HepG2 (cell line): ENCODE measurements at regions of chr12 and their contacts with region 1.

Region 1: DNA sequence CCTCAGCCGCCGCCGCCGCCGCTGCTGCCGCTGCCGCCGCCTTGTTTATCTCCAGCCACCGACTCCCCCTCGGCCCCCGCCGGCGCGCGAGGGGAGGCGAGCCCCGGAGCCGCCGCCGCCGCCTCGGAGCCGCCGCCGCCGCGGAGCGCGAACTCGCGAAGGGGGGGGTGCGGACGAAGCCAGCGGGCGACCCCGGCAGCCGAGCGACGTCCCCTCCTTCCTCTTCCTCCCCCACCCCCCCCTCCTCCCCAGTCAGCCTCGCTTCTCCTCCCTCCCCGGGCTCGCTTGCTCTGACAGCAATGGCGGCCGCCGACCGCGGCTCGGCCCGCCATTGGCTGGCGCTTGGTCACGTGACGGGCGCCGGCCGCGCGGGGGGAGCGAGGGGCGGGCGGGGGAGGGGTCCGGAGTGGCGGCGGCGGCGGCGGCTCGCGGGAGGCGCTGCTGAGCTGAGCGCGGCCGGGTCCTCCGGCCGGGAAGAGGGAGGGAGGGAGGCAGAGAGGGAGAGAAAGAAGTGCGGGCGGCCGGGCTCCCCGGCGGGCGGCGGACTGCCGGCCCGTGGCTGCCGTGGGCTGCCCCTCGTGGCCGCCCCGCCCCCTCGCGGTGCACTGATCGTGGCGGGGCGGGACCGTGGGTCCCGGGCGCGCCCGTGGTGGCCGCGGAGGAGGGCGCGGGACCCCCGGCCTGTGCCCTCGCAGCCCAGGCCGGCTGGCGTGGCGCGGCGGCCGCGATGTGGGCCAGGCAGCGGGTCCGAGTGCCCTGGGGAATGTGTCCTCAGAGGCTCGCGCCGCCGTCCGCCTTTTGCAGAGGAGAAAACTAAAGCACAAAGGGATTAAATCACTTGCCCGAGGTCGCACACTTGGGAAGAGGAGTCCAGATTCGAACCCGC is at the start of gene MED13L:
- DNase-seq: peak; percentile 64
- ATAC-seq: peak; percentile 72
- H3K4me3 ChIP-seq: peak within 1 kb of the TSS; percentile 88 to 94 (median 89)
- H3K27ac ChIP-seq: peak within 1 kb of the TSS; percentile 93
- H3K4me1 ChIP-seq: peaks cover 51% of the 10 kb centered on the region
- H3K27me3 ChIP-seq: peaks cover 2 to 19% of the 10 kb centered on the region in 2 experiments; a peak in 4 of 5 replicates
- CTCF ChIP-seq: peak; percentile 58
- EP300 ChIP-seq: no peak
- POLR2A ChIP-seq: peak; percentile 42 to 61; a peak in 2 of 4 replicates
- RAD21 ChIP-seq: peak; percentile 60
- total RNA-seq, gene MED13L: 32.9 and 38.9 TPM in 2 replicates

Region 2: DNA sequence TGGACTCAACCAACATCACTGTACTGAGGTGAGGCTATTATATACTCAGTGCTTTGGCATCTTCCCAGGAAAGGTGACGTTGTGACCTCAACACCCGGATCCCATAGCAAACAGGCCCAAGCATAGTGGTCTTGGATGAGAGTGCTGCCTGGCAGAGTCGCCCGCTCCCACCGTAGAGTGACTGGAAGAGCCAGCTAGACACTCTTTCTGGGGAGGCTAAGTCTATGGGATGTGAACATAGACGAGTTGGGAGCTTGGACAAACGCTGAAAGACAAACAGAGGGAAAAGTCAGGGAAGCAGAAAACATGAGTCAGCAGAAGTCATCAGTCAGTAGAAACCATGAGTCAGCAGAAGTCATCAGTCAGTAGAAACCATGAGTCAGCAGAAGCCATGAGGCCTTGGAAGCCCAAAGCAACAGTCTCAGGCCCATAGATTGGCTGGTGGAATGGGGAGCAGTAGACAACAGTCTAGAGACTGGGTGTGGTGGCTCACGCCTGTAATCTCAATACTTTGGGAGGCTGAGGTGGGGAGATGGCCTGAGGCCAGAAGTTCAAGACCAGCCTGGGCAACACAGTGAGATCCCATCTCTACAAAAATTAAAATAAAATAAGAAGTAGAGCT is 215.2 kb after region 1 on chr12:
- CTCF ChIA-PET with region 1: no interaction called
- POLR2A ChIA-PET with region 1: no interaction called
- in situ Hi-C with region 1: no loop called
- intact Hi-C with region 1: no loop called
- DNase-seq: no peak
- ATAC-seq: no peak
- H3K4me3 ChIP-seq: no peak overlapping the region
- H3K27ac ChIP-seq: no peak overlapping the region
- H3K4me1 ChIP-seq: no peaks in the 10 kb centered on the region
- H3K27me3 ChIP-seq: 0 out of 5 replicates have a peak, but pooled peaks cover 0 to 3% of the 10 kb centered on the region in 2 experiments
- CTCF ChIP-seq: no peak
- EP300 ChIP-seq: no peak
- POLR2A ChIP-seq: no peak
- RAD21 ChIP-seq: no peak

Region 3: DNA sequence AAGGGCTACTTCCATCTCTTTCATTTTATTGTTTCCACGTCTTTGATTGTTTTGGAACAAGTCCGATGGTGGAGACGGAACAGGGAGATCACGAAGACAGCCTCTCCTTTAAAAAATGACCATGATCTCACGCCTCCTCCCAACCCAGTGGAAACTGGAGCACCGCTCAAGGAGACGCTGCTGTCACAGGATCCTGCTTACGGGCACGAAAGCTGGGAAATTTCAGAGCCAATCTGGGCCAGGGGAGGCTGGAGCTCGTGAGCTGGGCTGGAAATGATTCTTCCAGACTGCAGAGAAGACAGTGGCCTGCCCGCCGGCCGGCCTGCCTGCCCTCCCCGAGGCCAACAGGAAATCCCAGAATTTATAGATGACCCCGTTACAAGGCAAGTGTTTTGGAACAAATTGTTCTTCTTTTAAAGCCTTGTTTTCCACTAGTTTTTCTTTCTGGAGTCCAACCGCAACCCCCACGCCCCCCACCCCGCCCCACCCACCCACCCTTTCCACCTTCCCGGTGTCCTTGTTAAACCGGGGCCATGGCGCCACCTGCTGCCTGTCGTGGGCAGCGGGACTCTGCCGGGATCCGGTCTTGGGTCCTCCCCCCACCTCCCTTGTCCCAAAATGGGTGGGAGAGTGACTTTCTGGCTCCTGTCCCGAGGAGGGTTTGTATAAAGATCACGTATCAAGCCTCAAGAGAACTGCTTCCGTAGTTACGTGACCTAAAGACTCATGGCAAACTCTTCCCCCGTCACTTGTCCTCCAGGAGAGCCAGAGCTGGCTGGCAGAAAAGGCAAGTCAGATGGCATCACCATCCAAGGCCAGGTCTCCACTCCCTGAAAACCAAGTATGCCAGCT is 321.9 kb after region 1 on chr12:
- CTCF ChIA-PET with region 1: no interaction called
- POLR2A ChIA-PET with region 1: no interaction called
- in situ Hi-C with region 1: loop called (anchors 5 kb)
- intact Hi-C with region 1: no loop called
- DNase-seq: peak; percentile 22
- ATAC-seq: peak; percentile 85
- H3K4me3 ChIP-seq: peak overlapping the region in 1 of 3 experiments; percentile 34; a peak in 1 of 6 replicates
- H3K27ac ChIP-seq: no peak overlapping the region
- H3K4me1 ChIP-seq: peaks cover 21% of the 10 kb centered on the region
- H3K27me3 ChIP-seq: peaks cover 0 to 5% of the 10 kb centered on the region in 2 experiments; a peak in 1 of 5 replicates
- CTCF ChIP-seq: peak; percentile 70
- EP300 ChIP-seq: no peak
- POLR2A ChIP-seq: no peak
- RAD21 ChIP-seq: 0 out of 2 replicates have a peak, but pooled peaks have one; percentile 16